Psoas muscle (tissue), 8 donors: ENCODE measurements at regions of chr5 and their contacts with region 1.

Region 1: DNA sequence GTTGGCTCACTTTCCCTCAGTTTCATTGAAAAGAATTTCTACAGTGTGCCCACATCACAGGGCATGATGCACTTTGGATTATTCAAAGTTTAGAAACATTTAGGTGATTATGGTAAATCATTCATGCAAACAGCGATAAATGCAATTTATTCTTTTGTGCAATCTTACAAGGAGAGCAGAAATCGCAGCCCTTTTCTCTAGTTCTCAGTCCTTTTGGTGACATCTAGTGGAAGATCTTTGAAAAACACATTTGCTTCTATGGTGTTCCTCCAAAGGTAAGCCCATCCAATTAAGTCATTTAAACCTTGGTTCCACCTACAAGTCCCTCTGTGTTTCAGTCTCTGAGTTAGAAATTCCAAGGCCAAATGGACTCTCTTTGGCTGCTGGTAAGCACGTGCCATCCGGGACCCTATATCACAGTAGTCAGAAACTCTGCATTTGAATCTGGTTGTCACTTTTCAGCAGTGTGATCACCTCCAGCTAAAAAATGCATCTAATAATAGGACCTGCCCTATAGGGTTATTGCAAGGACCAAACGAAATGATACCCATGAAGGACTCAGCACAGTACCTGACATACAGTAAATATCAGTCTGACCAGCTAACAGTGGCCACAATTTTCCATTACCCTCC is 66.4 kb downstream of the MACROH2A1 start:
- DNase-seq: no peak
- ATAC-seq: peak in 2 of 4 donors; percentile 52 to 67
- H3K4me3 ChIP-seq: no peak overlapping the region
- H3K27ac ChIP-seq: no peak overlapping the region
- H3K4me1 ChIP-seq: peaks cover 22% of the 10 kb centered on the region
- H3K27me3 ChIP-seq: no peaks in the 10 kb centered on the region
- CTCF ChIP-seq: peak; percentile 64

Region 2: GRCh38 chr5:135013947-135014570 is 318.6 kb before region 1 on chr5:
- intact Hi-C with region 1: loop called in 1 of 2 experiments (anchors 10 kb)
- DNase-seq: no peak
- ATAC-seq: peak in 1 of 4 donors; percentile 40
- H3K4me3 ChIP-seq: no peak overlapping the region
- H3K27ac ChIP-seq: no peak overlapping the region
- H3K4me1 ChIP-seq: no peaks in the 10 kb centered on the region
- H3K27me3 ChIP-seq: no peaks in the 10 kb centered on the region
- CTCF ChIP-seq: no peak

Region 3: GRCh38 chr5:135191084-135191826 is 141.4 kb before region 1 on chr5:
- intact Hi-C with region 1: loop called (anchors 5 kb)
- DNase-seq: peak; percentile 74 to 88
- ATAC-seq: peak; percentile 98 to 99 (median 98)
- H3K4me3 ChIP-seq: peak overlapping the region; percentile 74
- H3K27ac ChIP-seq: peak overlapping the region; percentile 8
- H3K4me1 ChIP-seq: peaks cover 4% of the 10 kb centered on the region
- H3K27me3 ChIP-seq: no peaks in the 10 kb centered on the region
- CTCF ChIP-seq: peak; percentile 94

Region 4: GRCh38 chr5:135255461-135256178 is 77.0 kb before region 1 on chr5:
- intact Hi-C with region 1: loop called (anchors 5 kb)
- DNase-seq: no peak
- ATAC-seq: peak in 3 of 4 donors; percentile 37 to 65 (median 51)
- H3K4me3 ChIP-seq: no peak overlapping the region
- H3K27ac ChIP-seq: no peak overlapping the region
- H3K4me1 ChIP-seq: peaks cover 25% of the 10 kb centered on the region
- H3K27me3 ChIP-seq: peaks cover 0 to 3% (median 0%) of the 10 kb centered on the region in 3 donors
- CTCF ChIP-seq: no peak